ENCODE measurements at regions of chr1 and their contacts with region 1.

Region 1: GRCh38 chr1:29202584-29203340 is 21.1 kb upstream of the SRSF4 start:
- DNase-seq: peak; percentile 94
- ATAC-seq: peak; percentile 96
- H3K4me3 ChIP-seq: peak overlapping the region in 1 of 2 experiments; percentile 2; a peak in 1 of 4 replicates
- H3K27ac ChIP-seq: peak overlapping the region; percentile 23; the same call in 1 of the 2 replicates
- H3K4me1 ChIP-seq: peaks cover 7 to 8% of the 10 kb centered on the region in 2 experiments
- H3K27me3 ChIP-seq: no peaks in the 10 kb centered on the region
- CTCF ChIP-seq: peak; percentile 90 to 98 (median 98)
- POLR2A ChIP-seq: no peak
- RAD21 ChIP-seq: peak; percentile 98

Region 2: GRCh38 chr1:28789412-28789811 is 413.4 kb before region 1 on chr1:
- CTCF ChIA-PET with region 1: interaction called, 4 read pairs
- POLR2A ChIA-PET with region 1: no interaction called
- RAD21 ChIA-PET with region 1: no interaction called
- intact Hi-C with region 1: loop called (anchors 5 kb)
- DNase-seq: no peak
- ATAC-seq: no peak
- H3K4me3 ChIP-seq: no peak overlapping the region
- H3K27ac ChIP-seq: no peak overlapping the region
- H3K4me1 ChIP-seq: peaks cover 0 to 11% of the 10 kb centered on the region in 2 experiments; a peak in 2 of 4 replicates
- H3K27me3 ChIP-seq: no peaks in the 10 kb centered on the region
- CTCF ChIP-seq: no peak
- POLR2A ChIP-seq: no peak
- RAD21 ChIP-seq: no peak

Measured in HCT116 (cell line).